ENCODE measurements at regions of chr7 and their contacts with region 1.

Region 1: GRCh38 chr7:41940760-41941343 is 238.0 kb upstream of the INHBA start:
- DNase-seq: peak in 8 of 10 donors; percentile 40 to 80 (median 66)
- H3K4me3 ChIP-seq: no peak overlapping the region
- H3K27ac ChIP-seq: no peak overlapping the region
- H3K27me3 ChIP-seq: no peaks in the 10 kb centered on the region
- CTCF ChIP-seq: peak; percentile 86 to 97 (median 93)

Region 2: DNA sequence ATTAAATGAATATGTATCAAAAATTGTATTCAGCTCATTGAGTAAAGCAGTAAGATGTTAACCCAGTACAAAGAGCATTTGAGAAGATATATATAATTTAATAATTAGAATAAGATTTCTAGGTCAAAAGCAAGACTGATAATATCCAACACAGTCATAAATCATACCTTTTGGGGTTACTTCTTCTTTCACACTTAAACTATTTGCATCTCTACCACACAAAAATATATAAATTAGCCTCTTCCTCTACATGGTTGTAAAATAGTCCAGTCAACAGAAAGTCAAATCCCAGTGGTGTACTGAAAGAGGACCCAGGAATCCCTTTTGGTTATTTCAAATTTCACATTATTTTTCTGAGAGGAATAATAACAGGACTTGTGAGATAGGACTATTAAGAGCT is 33.4 kb before region 1 on chr7:
- intact Hi-C with region 1: no loop called
- DNase-seq: no peak
- H3K4me3 ChIP-seq: no peak overlapping the region
- H3K27ac ChIP-seq: no peak overlapping the region
- H3K27me3 ChIP-seq: peaks cover 0 to 4% (median 0%) of the 10 kb centered on the region in 45 donors
- CTCF ChIP-seq: no peak

Region 3: GRCh38 chr7:42128703-42129102 is 187.9 kb after region 1 on chr7:
- intact Hi-C with region 1: no loop called
- DNase-seq: no peak
- H3K4me3 ChIP-seq: no peak overlapping the region
- H3K27ac ChIP-seq: no peak overlapping the region
- H3K27me3 ChIP-seq: peaks cover 0 to 5% (median 0%) of the 10 kb centered on the region in 45 donors
- CTCF ChIP-seq: no peak

Region 4: DNA sequence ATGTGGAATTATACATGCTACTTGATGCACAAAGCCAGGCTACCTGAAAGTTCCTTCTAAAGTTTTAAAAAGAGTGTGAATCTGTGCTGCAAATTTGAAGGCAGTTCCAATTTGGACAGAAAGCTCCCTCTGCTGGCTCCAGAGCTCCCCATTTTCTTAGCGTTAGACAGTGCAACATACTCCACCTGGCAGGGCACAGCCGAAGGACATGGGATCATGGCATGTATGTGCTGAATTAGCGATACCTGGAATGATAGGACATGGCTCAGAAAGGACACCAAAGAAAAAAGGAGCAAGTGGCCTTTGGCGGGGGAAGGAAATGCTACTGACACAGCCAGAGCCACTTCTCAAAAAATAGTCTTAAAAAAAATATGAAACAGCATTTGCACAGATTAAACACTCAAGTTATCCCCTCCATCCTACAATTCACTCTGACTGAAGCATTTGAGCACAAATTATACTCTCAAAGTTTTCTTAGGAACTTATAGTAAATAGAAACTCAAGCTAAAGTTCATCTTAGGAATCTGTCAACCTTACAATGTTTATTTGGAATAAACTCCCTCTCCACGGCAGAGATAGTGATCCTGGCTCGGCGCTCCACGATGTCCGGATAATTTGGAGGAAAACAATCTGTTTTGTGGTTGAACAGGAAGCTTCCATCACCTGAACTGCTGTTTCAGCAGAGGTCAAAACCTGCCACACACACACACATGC is 891.0 kb after region 1 on chr7:
- intact Hi-C with region 1: loop called in 1 of 2 experiments (anchors 5 kb)
- DNase-seq: peak in 8 of 10 donors; percentile 7 to 72 (median 56)
- H3K4me3 ChIP-seq: no peak overlapping the region
- H3K27ac ChIP-seq: no peak overlapping the region
- H3K27me3 ChIP-seq: peaks cover 0 to 10% (median 0%) of the 10 kb centered on the region in 45 donors
- CTCF ChIP-seq: peak; percentile 49 to 90 (median 75)

Region 5: GRCh38 chr7:42843205-42843800 is 902.5 kb after region 1 on chr7:
- intact Hi-C with region 1: loop called in 1 of 2 experiments (anchors 10 kb)
- DNase-seq: peak in 7 of 10 donors; percentile 15 to 56 (median 35)
- H3K4me3 ChIP-seq: peak overlapping the region in 38 of 59 donors; percentile 9 to 50 (median 34)
- H3K27ac ChIP-seq: no peak overlapping the region
- H3K27me3 ChIP-seq: peaks cover 0 to 10% (median 0%) of the 10 kb centered on the region in 45 donors
- CTCF ChIP-seq: peak in 55 of 56 donors; percentile 15 to 75 (median 56)

Region 6: DNA sequence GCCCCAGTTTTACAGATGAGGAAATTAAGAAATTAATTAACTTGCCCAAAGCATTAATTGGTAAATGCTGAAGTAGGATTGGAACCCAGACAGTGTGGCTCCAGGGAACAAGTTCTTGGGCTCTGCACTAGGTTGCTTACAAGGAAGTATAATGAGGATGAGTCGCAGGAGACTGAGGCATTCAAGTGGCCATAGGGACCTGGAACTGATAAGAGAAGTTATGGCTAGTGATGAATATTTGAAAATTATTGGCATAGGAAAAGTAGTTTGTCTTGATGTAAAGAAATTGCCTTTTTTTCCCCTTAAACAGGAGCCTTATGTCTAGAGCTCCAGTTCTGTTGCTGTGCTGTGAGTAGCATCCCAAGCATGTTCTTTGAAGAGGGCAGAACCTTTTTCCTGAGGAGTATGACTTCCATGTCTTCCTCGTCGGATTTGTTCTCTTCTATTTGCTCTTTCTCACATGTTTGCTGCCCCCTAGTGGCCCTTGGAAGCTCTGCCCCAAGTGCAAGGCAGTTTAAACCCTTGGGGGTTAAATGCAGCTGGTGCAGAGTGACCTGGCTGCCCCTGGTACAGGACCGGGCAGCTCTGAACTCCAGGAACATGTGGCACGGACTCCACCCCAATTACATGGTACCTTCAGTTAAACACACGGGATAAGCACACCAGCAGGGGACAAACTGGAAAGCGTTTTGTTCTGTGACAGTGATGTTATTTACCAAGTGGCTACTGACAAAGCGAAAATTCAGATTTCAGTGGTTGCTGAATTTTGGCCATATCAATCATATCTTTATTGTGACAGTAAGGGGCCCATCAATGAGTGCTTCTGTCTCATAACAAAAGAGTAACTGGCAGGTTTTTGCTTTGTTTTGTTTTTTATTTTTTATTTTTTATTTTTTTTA is 1320.4 kb after region 1 on chr7:
- intact Hi-C with region 1: loop called in 1 of 2 experiments (anchors 10 kb)
- DNase-seq: peak in 9 of 10 donors; percentile 35 to 71 (median 57)
- H3K4me3 ChIP-seq: no peak overlapping the region
- H3K27ac ChIP-seq: no peak overlapping the region
- H3K27me3 ChIP-seq: no peaks in the 10 kb centered on the region
- CTCF ChIP-seq: peak; percentile 67 to 95 (median 84)

Measured in dorsolateral prefrontal cortex (tissue), 120 donors.